ENCODE measurements at regions of chr4 and their contacts with region 1.

Region 1: DNA sequence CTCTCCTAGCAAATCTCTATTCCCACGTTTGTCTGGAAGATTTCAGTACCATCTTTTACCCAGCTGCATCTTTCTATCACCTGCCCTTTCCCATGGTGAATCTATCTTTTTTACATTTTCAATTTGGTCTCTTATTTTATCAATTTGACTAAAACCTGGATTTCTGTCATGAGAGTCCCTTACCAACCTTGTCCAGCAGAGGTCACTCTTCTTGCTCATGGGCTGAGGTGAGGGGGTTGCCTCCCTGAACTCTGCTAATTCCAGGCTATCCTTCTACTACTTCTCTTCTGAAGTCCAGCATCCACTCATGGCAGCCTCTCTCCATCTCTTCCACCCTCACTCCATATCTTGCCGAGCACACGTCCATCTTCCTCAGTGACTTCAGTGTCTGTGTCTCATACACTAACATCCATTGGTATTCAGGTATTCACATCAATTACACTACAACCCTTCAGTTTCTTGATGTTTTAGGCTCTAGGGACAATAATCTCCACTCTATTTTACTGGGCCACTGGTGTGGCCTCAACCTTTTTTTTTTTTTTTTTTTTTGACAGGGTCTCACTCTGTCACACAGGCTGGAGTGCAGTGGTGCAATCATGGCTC is 17.8 kb upstream of the ZNF827 start:
- DNase-seq: peak; percentile 56
- CTCF ChIP-seq: peak; percentile 69

Region 2: GRCh38 chr4:145945431-145946155 is 10.8 kb before region 1 on chr4:
- CTCF ChIA-PET with region 1: interaction called, 11 read pairs
- POLR2A ChIA-PET with region 1: no interaction called
- DNase-seq: no peak
- CTCF ChIP-seq: no peak

Region 3: GRCh38 chr4:146222313-146222712 is 265.9 kb after region 1 on chr4:
- CTCF ChIA-PET with region 1: no interaction called
- POLR2A ChIA-PET with region 1: no interaction called
- DNase-seq: no peak
- CTCF ChIP-seq: no peak